CD4-positive, alpha-beta T cell (primary cell): ENCODE measurements at regions of chr6 and their contacts with region 1.

Region 1: DNA sequence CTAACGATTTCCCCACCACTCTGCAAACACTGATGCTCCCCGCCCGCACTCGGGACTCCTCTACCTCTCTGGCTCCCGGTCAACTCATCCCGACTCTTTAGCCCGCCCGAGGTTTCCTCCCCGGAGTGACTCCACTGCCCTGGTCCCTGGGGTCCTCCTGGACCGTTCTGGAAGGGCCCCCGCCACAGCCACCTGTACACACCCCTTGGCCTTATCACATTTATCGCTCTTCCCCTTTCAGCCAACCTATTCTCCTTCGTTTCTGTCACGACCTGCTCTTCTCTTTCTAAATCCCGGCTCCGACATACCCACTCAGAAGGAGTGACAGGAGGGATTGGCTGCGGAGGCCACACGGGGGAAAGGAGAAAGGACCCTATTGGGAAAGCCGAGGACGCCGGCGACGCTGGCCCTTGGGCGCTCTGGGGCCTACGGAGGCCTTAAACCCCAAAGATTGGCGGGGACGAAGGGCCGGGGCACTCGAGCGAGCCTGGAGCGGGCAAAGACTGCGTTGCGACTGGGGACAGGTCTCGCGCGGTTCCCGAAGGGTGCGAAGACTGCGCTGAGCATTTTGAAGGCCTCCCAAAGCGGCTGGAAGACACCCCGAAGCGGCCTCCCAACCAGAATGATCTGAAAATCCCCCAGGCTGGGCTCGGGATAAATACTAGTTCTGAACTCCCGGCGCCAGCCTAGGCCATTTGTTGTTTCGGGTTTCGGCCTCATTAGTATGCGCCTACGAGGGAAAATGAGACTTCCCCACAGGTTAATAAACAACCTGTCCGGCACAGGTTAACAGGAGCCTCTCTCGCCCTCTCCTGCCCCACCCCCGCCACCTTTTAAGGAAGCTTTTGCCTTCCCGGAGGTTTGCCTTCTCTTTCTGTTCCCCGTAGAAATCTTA is 9.2 kb downstream of the SIM1 start:
- DNase-seq: no peak
- ATAC-seq: no peak
- H3K4me3 ChIP-seq: no peak overlapping the region
- H3K4me3 Mint-ChIP-seq: no peak overlapping the region
- H3K27ac ChIP-seq: no peak overlapping the region
- H3K27ac Mint-ChIP-seq: no peak overlapping the region
- H3K4me1 ChIP-seq: peaks cover 4% of the 10 kb centered on the region
- H3K4me1 Mint-ChIP-seq: no peaks in the 10 kb centered on the region
- H3K27me3 ChIP-seq: peaks cover 91 to 96% of the 10 kb centered on the region in 2 experiments
- H3K27me3 Mint-ChIP-seq: peaks cover 20% of the 10 kb centered on the region
- CTCF ChIP-seq: no peak

Region 2: DNA sequence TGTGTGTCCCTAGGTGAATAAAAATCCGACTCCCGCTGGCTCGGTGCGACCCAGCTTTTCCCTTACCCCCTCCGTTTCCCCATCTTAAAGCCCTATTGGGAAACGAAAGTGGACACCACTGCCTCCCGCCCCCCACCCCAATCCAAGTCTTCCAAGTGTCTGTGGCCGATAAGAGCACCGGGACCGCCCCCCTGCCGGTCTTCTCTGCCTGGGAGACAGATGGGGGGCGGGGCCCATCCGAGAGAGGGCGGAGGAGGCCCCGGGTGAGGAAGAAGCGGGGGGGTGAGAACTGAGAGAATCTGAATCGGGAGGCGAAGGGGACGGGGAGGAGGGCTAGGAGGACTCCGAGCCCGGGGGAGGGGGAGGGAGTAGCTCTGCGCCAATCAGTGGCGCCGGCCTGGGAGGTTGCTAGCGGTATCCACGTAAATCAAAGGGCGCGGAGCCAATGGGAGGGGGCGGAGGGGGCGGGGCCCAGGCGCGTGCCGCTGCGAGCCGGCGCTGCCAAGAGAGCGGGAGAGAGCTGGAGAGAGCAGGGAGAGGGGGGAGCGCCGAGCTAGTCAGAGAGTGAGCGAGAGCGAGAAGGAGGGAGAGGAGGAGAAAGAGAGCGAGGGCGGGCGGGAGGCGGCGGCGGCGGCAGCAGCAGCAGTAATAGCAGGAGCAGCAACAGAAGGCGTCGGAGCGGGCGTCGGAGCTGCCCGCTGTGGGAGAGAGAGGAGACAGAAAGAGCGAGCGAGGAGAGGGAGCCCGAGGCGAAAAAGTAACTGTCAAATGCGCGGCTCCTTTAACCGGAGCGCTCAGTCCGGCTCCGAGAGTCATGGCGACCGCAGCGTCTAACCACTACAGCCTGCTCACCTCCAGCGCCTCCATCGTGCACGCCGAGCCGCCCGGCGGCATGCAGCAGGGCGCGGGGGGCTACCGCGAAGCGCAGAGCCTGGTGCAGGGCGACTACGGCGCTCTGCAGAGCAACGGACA is 1621.1 kb before region 1 on chr6 and contains the start of gene POU3F2:
- CTCF ChIA-PET with region 1: no interaction called
- POLR2A ChIA-PET with region 1: no interaction called
- intact Hi-C with region 1: loop called in 1 of 2 experiments (anchors 5 kb)
- DNase-seq: peak; percentile 33 to 82 (median 55)
- ATAC-seq: peak; percentile 73
- H3K4me3 ChIP-seq: peak within 1 kb of the TSS; percentile 62
- H3K4me3 Mint-ChIP-seq: peak within 1 kb of the TSS; percentile 91
- H3K27ac ChIP-seq: no peak within 1 kb of the TSS
- H3K27ac Mint-ChIP-seq: no peak within 1 kb of the TSS
- H3K4me1 ChIP-seq: peaks cover 55% of the 10 kb centered on the region
- H3K4me1 Mint-ChIP-seq: peaks cover 41% of the 10 kb centered on the region
- H3K27me3 ChIP-seq: peaks cover 61 to 87% of the 10 kb centered on the region in 2 experiments
- H3K27me3 Mint-ChIP-seq: peaks cover 94% of the 10 kb centered on the region
- CTCF ChIP-seq: no peak
- total RNA-seq, gene POU3F2: not detected

Region 3: GRCh38 chr6:99779631-99780555 is 675.6 kb before region 1 on chr6:
- CTCF ChIA-PET with region 1: no interaction called
- POLR2A ChIA-PET with region 1: no interaction called
- intact Hi-C with region 1: no loop called
- DNase-seq: no peak
- ATAC-seq: no peak
- H3K4me3 ChIP-seq: no peak overlapping the region
- H3K4me3 Mint-ChIP-seq: no peak overlapping the region
- H3K27ac ChIP-seq: no peak overlapping the region
- H3K27ac Mint-ChIP-seq: no peak overlapping the region
- H3K4me1 ChIP-seq: no peaks in the 10 kb centered on the region
- H3K4me1 Mint-ChIP-seq: no peaks in the 10 kb centered on the region
- H3K27me3 ChIP-seq: peaks cover 2 to 15% of the 10 kb centered on the region in 2 experiments
- H3K27me3 Mint-ChIP-seq: peaks cover 73% of the 10 kb centered on the region
- CTCF ChIP-seq: no peak

Region 4: GRCh38 chr6:99933129-99933528 is 522.3 kb before region 1 on chr6:
- CTCF ChIA-PET with region 1: no interaction called
- POLR2A ChIA-PET with region 1: no interaction called
- intact Hi-C with region 1: no loop called
- DNase-seq: no peak
- ATAC-seq: no peak
- H3K4me3 ChIP-seq: no peak overlapping the region
- H3K4me3 Mint-ChIP-seq: no peak overlapping the region
- H3K27ac ChIP-seq: no peak overlapping the region
- H3K27ac Mint-ChIP-seq: no peak overlapping the region
- H3K4me1 ChIP-seq: no peaks in the 10 kb centered on the region
- H3K4me1 Mint-ChIP-seq: no peaks in the 10 kb centered on the region
- H3K27me3 ChIP-seq: no peaks in the 10 kb centered on the region
- H3K27me3 Mint-ChIP-seq: no peaks in the 10 kb centered on the region
- CTCF ChIP-seq: no peak

Region 5: DNA sequence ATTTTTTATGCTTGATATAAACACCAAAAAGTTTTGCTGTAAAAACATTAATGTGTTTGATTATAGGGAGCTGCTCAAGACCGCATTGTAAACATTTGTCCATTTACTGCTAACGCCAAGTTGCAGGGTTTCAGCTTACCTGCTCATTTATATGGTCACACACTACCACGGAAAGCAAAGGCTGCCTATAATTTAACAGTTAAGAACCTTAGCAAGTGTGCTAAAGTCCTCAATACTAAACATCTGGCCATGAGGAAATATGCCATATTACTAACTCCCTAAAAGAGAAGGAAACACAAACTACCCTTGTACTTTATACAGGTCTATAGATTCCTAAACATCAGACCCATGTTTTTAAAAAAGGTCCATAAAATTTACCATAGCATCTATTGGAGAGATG is 296.1 kb after region 1 on chr6:
- CTCF ChIA-PET with region 1: no interaction called
- POLR2A ChIA-PET with region 1: no interaction called
- intact Hi-C with region 1: no loop called
- DNase-seq: no peak
- ATAC-seq: no peak
- H3K4me3 ChIP-seq: no peak overlapping the region
- H3K4me3 Mint-ChIP-seq: no peak overlapping the region
- H3K27ac ChIP-seq: no peak overlapping the region
- H3K27ac Mint-ChIP-seq: no peak overlapping the region
- H3K4me1 ChIP-seq: no peaks in the 10 kb centered on the region
- H3K4me1 Mint-ChIP-seq: no peaks in the 10 kb centered on the region
- H3K27me3 ChIP-seq: no peaks in the 10 kb centered on the region
- H3K27me3 Mint-ChIP-seq: no peaks in the 10 kb centered on the region
- CTCF ChIP-seq: no peak